Natural killer cell (primary cell): ENCODE measurements at regions of chr10 and their contacts with region 1.

Region 1: DNA sequence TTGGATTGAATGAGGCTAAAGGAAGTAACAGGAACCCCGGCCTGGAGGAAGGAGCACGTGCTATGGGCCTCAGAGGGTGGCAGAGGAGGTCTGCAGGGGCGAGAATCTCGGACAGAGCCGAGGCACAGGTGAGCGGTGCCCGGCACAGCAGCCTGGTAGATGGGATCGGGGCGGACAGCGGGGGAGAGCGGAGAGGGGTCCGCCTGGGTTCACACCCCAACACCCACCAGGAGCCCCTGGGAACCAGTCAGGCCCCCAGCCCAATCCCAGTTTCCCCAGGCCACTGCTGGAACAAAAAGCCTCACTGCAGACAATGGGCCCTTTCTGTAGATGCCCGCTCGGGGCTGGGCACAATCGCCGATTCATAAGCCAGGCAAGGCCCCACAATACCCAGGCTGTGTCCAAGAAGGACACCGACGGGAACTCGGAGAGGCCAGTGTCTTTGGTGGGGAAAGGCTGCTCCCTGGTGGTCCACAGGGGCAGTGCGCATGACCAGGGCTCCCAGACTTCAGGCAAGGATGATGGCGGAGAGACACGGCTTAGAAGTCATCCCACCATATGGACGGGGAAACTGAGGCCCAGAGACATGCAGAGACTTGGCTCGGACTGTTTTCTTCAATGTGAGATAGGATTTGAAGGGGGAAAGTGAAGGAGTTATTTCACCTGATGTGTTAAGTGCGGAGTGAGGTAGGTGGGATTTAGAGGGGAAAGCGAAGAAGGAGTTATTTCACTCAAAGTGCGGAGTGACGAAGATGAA is 106.9 kb upstream of the GPR26 start:
- DNase-seq: peak; percentile 58 to 79
- ATAC-seq: peak; percentile 42 to 86 (median 59)
- H3K4me3 ChIP-seq: no peak overlapping the region
- H3K4me3 Mint-ChIP-seq: no peak overlapping the region
- H3K27ac ChIP-seq: no peak overlapping the region
- H3K27ac Mint-ChIP-seq: no peak overlapping the region
- H3K4me1 ChIP-seq: peaks cover 4% of the 10 kb centered on the region
- H3K4me1 Mint-ChIP-seq: peaks cover 5% of the 10 kb centered on the region in 2 donors
- H3K27me3 ChIP-seq: no peaks in the 10 kb centered on the region
- H3K27me3 Mint-ChIP-seq: peaks cover 7 to 21% of the 10 kb centered on the region in 2 donors
- CTCF ChIP-seq: peak; percentile 80

Region 2: DNA sequence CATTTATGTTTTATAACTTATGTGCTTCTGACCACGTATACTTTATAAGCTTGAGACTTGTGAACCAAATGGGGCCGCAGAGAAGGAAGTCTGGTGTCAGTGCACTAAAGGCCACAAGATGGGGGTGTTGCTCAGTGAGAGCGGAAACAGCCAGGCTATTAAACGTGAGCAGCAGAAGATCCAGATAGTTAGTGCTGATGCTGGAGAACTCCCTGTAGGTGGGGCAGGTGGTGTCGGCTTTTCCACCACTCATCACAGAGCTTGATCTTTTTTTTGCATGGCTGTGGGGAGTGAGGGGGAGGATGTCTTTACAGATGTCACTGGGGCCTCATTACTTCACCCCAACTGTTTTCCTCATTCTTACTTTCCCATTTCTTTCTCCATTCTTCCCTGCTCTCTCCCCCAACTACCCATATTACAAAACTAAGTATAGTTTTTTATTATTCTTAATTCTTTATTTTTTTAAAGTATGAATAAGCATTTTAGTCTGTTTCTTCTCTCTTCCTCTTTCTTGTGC is 515.8 kb before region 1 on chr10:
- intact Hi-C with region 1: loop called (anchors 1 kb)
- DNase-seq: peak in 1 of 2 donors; percentile 73
- ATAC-seq: peak; percentile 54 to 84 (median 75)
- H3K4me3 ChIP-seq: no peak overlapping the region
- H3K4me3 Mint-ChIP-seq: no peak overlapping the region
- H3K27ac ChIP-seq: no peak overlapping the region
- H3K27ac Mint-ChIP-seq: no peak overlapping the region
- H3K4me1 ChIP-seq: peaks cover 8% of the 10 kb centered on the region
- H3K4me1 Mint-ChIP-seq: peaks cover 10 to 18% of the 10 kb centered on the region in 2 donors
- H3K27me3 ChIP-seq: no peaks in the 10 kb centered on the region
- H3K27me3 Mint-ChIP-seq: no peaks in the 10 kb centered on the region
- CTCF ChIP-seq: peak; percentile 65

Region 3: DNA sequence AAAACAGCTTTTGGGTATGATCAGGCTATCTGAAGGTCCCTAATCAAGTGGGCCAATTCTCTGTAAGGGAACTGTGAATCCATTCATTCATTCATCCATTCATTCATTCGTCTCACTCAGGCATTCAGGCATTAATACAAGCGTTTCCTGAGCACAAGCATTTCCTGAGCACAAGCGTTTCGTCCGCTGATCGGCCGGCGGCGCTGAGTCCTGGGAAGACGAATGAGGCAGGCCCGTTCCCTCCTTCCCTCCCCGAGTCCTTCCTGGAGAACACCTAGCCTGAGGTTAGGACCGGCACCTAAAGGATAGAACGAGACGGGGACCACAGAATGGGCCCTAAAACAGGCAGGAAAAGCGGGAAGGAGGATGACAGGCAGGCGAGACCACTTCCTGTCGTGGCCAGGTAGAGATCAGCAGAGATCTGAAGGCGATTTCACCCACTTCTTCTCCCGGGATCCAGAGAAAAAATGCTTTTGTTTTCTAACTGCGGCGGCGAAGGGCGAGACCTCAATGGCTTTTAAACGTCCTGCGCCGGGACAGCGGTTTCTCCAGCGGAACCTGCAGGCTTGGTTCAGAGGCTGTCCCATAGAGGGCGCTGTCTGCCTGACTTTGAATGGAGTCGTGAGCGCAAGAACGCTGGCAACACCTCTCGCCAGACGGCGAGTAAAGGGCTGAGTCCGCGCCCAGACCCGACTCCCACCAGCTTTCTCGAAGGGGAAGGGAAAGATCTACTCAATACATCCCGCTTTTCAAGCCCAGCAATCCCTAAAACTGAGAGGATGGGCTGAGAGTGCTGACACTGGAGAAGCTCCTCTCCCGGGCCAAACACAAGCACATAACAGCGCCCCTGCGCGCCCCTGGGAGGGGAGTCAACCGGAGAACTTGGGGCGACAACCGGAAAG is 426.4 kb before region 1 on chr10:
- intact Hi-C with region 1: loop called (anchors 1 kb)
- DNase-seq: peak; percentile 73 to 92
- ATAC-seq: peak; percentile 74 to 81 (median 78)
- H3K4me3 ChIP-seq: no peak overlapping the region
- H3K4me3 Mint-ChIP-seq: peak overlapping the region; percentile 64
- H3K27ac ChIP-seq: no peak overlapping the region
- H3K27ac Mint-ChIP-seq: peak overlapping the region in 1 of 2 donors; percentile 53
- H3K4me1 ChIP-seq: peaks cover 40% of the 10 kb centered on the region
- H3K4me1 Mint-ChIP-seq: peaks cover 20 to 28% of the 10 kb centered on the region in 2 donors
- H3K27me3 ChIP-seq: peaks cover 54% of the 10 kb centered on the region
- H3K27me3 Mint-ChIP-seq: peaks cover 50 to 73% of the 10 kb centered on the region in 2 donors
- CTCF ChIP-seq: peak; percentile 84